Activated T-helper 2 cell treated with anti-CD3 and anti-CD28 coated beads, Interferon-gamma antibody, Interleukin-2, Interleukin-4, amounts not matched to agents 10 μg/mL and 5 μg/mL and 100 μg/mL, durations not matched to agents 14 hours and 24 hours and 36 hours (primary cell): ENCODE measurements at regions of chr17 and their contacts with region 1.

Region 1: GRCh38 chr17:75405365-75406221 is at the start of gene GRB2:
- DNase-seq: peak; percentile 100
- H3K4me3 Mint-ChIP-seq: peak within 1 kb of the TSS; percentile 95
- H3K27ac Mint-ChIP-seq: peak within 1 kb of the TSS; percentile 91
- H3K4me1 Mint-ChIP-seq: peaks cover 37% of the 10 kb centered on the region
- H3K27me3 Mint-ChIP-seq: no peaks in the 10 kb centered on the region
- total RNA-seq, gene GRB2: 176 and 188 TPM in 2 replicates

Region 2: DNA sequence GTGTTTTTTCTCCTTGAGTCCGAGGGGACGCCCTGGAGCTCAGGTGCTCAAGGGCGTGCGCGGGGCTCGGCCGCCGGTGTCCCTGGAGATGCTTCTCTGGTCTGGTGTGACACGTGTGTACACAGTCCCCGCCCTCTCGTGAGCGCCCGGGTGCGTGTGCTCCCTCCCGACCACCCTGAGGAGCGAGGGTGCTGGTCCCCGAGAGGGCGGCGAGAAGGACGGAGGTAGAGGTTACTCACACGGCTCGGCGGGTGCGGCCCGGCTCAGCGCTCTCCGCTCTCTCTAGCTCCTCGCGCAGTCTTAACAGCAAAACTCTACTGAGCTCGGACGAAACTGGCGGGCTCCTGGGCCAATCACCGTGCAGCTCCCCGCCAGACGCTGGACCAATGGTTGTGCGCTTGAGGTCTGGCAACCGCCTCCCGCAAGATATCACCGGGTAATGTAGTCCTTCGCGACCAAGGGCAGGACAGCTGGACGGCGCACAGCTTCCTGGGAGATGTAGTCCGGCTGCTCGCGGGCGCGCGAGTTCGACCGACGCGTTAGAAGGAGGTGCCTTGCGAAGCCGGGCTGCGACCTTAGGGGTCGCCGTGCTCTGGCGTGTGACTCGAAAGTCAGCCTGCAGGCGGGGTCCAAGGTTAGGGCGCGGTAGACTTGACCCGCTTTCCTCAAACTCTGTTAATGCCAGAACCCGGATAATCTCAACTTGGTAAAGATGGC is 116.3 kb before region 1 on chr17 and contains the start of gene SLC25A19:
- intact Hi-C with region 1: loop called (anchors 1 kb)
- DNase-seq: peak; percentile 98
- H3K4me3 Mint-ChIP-seq: peak within 1 kb of the TSS; percentile 99
- H3K27ac Mint-ChIP-seq: peak within 1 kb of the TSS; percentile 100
- H3K4me1 Mint-ChIP-seq: peaks cover 20% of the 10 kb centered on the region
- H3K27me3 Mint-ChIP-seq: no peaks in the 10 kb centered on the region
- total RNA-seq, gene SLC25A19: 97.4 and 101 TPM in 2 replicates

Region 3: DNA sequence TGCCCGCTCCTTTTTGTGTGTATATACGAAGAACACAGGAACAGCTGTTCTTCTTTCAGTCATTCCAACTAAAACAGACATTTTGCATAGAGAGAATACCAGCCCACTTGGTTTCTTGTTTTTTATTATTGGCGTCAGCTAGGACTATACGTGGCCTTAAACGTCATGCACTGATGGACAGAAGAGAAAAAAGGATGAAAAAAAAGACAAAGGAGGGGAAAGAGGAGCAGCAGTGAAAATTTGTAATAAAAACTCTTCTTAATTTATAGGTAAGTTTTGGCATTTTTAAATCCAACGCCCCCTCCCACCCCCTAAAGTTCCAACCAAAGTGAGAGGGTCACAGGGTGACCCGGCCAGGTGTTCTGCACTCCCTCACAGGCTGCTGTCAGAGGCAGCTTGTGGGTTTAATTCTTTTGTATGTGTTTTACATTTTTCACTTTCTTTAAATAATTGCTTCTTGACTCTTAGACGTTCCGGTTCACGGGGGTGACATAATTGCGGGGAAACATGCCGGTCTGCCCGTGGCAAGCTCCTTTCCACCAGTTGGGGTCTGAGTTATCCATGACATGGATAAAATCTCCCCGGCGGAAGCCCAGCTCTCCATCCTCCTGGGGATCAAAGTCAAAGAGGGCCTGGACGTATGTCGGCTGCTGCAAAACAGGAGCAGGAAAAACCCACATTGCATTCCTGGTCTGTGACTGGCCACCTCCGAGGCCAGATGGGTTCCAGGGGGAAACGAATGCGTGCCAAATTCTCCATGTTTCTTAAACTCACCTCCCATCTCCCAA is 85.5 kb before region 1 on chr17:
- intact Hi-C with region 1: loop called (anchors 1 kb)
- DNase-seq: no peak
- H3K4me3 Mint-ChIP-seq: no peak overlapping the region
- H3K27ac Mint-ChIP-seq: no peak overlapping the region
- H3K4me1 Mint-ChIP-seq: peaks cover 19% of the 10 kb centered on the region
- H3K27me3 Mint-ChIP-seq: no peaks in the 10 kb centered on the region

Region 4: GRCh38 chr17:75345514-75346167 is 60.0 kb before region 1 on chr17:
- intact Hi-C with region 1: loop called (anchors 1 kb)
- DNase-seq: no peak
- H3K4me3 Mint-ChIP-seq: peak overlapping the region; percentile 73
- H3K27ac Mint-ChIP-seq: peak overlapping the region; percentile 87
- H3K4me1 Mint-ChIP-seq: peaks cover 82% of the 10 kb centered on the region
- H3K27me3 Mint-ChIP-seq: no peaks in the 10 kb centered on the region

Region 5: GRCh38 chr17:75393523-75394331 is 11.9 kb before region 1 on chr17:
- intact Hi-C with region 1: loop called (anchors 1 kb)
- DNase-seq: peak; percentile 74
- H3K4me3 Mint-ChIP-seq: peak overlapping the region; percentile 90
- H3K27ac Mint-ChIP-seq: peak overlapping the region; percentile 50
- H3K4me1 Mint-ChIP-seq: peaks cover 69% of the 10 kb centered on the region
- H3K27me3 Mint-ChIP-seq: no peaks in the 10 kb centered on the region

Region 6: DNA sequence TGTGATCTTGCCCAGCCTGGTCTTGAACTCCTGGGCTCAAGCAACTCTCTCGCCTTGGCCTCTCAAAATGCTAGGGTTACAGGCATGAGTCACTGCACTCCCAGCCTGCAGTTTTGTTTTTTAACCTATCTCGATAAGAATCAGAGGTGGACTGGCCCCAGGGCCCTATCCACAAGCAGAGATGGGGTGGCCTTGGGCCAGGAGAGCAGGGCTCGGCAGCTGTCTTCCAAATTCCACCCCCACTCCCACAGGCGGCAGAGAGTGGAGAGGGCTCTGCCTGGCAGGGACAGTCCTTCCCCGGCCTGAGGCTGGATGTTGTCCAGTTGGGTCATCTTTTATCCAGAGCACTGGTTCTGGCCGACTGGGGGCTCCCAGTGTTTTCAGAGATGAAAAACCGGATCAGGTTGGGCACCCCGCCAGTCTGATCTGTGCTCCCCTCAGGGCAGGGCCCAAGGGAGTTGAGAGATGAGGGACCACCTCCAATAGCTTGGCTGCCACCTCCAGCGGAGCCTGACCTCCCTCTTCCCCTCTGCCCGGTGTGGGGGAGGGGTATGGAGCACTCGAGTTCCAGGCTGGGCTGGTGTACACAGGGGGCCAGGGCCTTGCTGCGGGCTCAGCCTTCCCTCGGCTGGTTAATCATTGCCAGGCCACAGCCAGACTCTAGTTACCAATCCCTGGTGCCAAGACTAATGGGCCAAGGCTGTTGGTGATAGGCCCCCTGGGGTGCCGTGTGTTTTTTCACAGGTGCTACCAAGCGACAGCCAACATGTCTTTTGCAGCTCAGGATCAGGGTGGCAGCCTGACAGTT is 151.7 kb after region 1 on chr17:
- intact Hi-C with region 1: no loop called
- DNase-seq: no peak
- H3K4me3 Mint-ChIP-seq: no peak overlapping the region
- H3K27ac Mint-ChIP-seq: no peak overlapping the region
- H3K4me1 Mint-ChIP-seq: no peaks in the 10 kb centered on the region
- H3K27me3 Mint-ChIP-seq: no peaks in the 10 kb centered on the region